Adrenal gland (tissue), 19 donors: ENCODE measurements at regions of chr11 and their contacts with region 1.

Region 1: DNA sequence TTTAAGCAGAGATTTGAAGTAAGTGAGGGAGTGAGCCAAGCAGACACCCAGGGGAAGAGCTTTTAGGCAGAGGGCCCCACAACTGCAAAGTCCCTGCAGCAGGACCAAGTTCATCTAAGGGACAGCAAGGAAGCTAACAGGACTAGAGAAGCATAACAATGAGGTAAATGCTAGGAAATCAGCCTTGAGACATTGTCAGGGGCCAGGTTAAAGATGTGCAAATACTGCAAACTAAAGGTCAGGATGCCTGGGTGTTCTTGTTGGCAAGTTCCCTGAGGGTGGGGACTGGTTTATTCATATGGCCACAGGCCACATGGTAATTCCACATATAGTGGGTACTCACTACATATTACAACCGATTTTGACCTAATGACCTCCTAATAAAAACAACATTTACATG is 399.2 kb upstream of the NARS2 start:
- DNase-seq: no peak
- H3K4me3 ChIP-seq: no peak overlapping the region
- H3K27ac ChIP-seq: no peak overlapping the region
- H3K4me1 ChIP-seq: no peaks in the 10 kb centered on the region
- H3K27me3 ChIP-seq: no peaks in the 10 kb centered on the region
- CTCF ChIP-seq: no peak
- POLR2A ChIP-seq: no peak

Region 2: GRCh38 chr11:78916759-78917158 is 57.1 kb before region 1 on chr11:
- intact Hi-C with region 1: loop called in 1 of 2 experiments (anchors 10 kb)
- DNase-seq: no peak
- H3K4me3 ChIP-seq: no peak overlapping the region
- H3K27ac ChIP-seq: no peak overlapping the region
- H3K4me1 ChIP-seq: no peaks in the 10 kb centered on the region
- H3K27me3 ChIP-seq: no peaks in the 10 kb centered on the region
- CTCF ChIP-seq: no peak
- POLR2A ChIP-seq: no peak

Region 3: GRCh38 chr11:79062814-79063762 is 89.2 kb after region 1 on chr11:
- intact Hi-C with region 1: no loop called
- DNase-seq: peak in 2 of 7 donors; percentile 12 to 25
- H3K4me3 ChIP-seq: no peak overlapping the region
- H3K27ac ChIP-seq: no peak overlapping the region
- H3K4me1 ChIP-seq: no peaks in the 10 kb centered on the region
- H3K27me3 ChIP-seq: no peaks in the 10 kb centered on the region
- CTCF ChIP-seq: peak in 2 of 6 experiments; percentile 22 to 25
- POLR2A ChIP-seq: no peak